Dorsolateral prefrontal cortex (tissue), 120 donors: ENCODE measurements at regions of chr15 and their contacts with region 1.

Region 1: DNA sequence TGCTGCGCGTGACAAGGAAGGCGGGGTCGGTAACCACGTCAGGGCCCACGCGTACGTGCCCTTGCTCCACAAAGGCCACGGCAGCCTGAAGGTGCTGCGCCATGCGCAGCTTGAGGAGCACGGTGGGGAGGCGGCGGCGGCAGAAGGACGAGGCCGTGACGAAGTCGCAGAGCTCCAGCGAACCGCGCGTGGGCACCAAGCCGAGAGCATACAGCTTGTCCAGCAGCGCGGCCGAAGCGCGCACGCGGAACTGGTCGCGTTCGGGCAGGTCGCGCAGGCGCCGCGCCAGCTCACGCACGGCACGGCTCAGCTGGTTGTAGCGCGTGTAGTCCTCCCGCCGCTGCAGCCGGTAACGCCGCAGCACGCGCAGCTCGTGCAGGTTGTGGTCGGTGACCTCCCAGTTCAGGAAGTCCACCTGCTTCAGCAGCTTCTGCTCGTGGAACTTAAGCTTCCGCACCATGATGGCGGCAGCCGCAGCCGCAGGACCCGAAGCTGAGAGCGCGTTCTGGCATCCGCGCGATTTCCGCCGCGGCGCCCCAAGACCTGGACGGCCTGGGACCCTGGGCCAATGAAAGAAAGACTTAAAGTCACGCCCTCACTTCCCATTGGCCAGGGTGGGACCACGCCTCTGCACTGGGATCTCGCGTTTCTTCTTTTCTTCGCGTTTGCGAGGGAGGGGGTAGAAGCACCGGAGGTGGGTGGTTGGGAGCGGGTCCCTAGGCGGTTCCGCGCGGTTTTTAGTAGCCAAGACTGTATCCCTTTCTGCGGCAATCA is at the start of gene IMP3:
- DNase-seq: peak; percentile 91 to 98 (median 96)
- H3K4me3 ChIP-seq: peak within 1 kb of the TSS; percentile 64 to 100 (median 93)
- H3K27ac ChIP-seq: peak within 1 kb of the TSS; percentile 53 to 99 (median 95)
- H3K27me3 ChIP-seq: no peaks in the 10 kb centered on the region
- CTCF ChIP-seq: peak in 31 of 56 donors; percentile 1 to 48 (median 28)
- total RNA-seq, gene IMP3: 32.2 to 67.9 (median 50.7) TPM

Region 2: GRCh38 chr15:75023181-75023871 is 616.6 kb before region 1 on chr15 and contains the start of gene PPCDC:
- intact Hi-C with region 1: loop called in 1 of 2 experiments (anchors 10 kb)
- DNase-seq: peak; percentile 92 to 98 (median 97)
- H3K4me3 ChIP-seq: peak within 1 kb of the TSS; percentile 49 to 98 (median 89)
- H3K27ac ChIP-seq: peak within 1 kb of the TSS in 57 of 59 donors; percentile 27 to 96 (median 88)
- H3K27me3 ChIP-seq: no peaks in the 10 kb centered on the region
- CTCF ChIP-seq: peak in 47 of 56 donors; percentile 3 to 62 (median 33)
- total RNA-seq, gene PPCDC: 3.9 to 23.6 (median 9.9) TPM

Region 3: DNA sequence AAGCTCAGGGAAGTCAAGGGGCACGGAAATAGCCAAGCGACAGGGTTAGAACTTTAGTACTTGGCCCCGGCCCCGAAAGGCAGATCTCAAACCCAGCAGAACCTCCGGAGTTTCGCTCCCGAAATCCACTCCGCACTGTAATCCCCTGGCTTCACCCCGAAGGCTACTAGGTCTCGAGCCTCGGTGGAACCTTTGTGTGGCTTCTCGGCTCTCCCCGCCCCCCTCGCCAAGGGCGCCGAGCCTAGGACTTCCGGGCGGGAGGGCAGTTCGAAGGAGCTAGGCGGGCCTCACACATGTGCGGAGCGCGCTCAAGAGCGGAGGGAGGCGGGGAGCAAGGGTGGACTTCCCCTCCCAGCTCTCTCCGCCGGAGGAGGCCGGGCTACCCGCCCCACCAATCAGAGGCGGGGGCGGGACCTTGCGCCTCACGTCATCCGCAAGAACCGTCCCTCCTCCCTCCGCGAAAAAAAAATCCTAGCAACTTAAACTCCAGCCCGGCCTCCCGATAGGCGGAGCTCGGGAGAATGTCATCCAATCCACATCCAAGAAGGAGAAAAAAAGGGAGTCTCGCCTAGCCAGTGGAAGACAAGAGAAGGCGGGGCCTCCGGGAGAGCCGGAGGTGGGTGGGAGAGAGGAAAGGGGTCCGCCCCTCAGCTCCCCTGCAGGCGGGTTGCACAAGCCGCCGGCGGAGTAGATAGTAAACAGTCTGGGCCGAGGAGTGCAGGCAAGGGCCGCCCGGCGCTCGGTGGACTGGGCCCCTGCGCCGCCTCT is 186.0 kb before region 1 on chr15:
- intact Hi-C with region 1: loop called (anchors 5 kb)
- DNase-seq: peak; percentile 94 to 99 (median 98)
- H3K4me3 ChIP-seq: peak overlapping the region; percentile 60 to 98 (median 91)
- H3K27ac ChIP-seq: peak overlapping the region; percentile 65 to 99 (median 95)
- H3K27me3 ChIP-seq: no peaks in the 10 kb centered on the region
- CTCF ChIP-seq: peak in 22 of 56 donors; percentile 8 to 43 (median 16)

Region 4: DNA sequence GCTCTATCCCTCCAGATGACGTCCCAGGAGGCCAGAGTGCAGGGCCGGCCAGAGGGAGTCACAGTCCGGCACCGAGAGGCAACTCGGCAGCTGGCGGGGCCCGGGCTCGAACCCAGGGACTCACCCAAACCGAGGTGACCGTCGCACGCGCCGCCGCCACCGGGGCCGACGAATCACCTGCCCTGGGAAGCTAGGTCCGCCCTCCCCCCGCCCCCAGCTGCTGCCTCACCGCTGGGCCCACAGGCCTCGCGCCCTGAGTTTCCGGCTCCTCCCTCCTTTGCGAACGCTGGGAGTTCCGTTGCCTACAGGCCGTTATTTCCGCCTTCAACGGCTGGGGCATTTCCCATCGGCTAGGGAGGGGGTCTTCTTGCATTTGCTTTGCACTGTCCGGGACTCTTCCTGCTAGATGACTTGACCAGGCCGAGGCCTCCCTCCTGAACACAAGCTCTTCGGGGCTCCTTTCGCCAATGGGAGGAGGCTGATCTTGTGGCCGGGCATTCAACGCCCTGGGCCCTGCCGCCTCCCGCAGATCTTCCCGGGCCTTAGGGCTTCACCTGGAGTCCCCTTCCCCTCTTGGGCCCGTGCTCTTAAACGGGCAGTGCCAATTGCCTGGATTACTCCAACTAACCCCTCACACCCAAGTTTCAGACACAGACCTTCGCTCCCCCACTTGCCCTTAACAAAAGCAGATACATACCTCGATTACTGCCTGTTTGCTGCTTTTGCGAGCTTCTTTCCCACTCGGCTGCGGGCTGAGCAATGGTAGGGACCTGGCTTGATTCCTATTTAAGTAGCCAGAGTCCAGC is 14.2 kb before region 1 on chr15 and contains the start of gene SNUPN:
- intact Hi-C with region 1: loop called (anchors 1 to 2 kb)
- DNase-seq: peak; percentile 82 to 95 (median 92)
- H3K4me3 ChIP-seq: peak within 1 kb of the TSS; percentile 62 to 99 (median 94)
- H3K27ac ChIP-seq: peak within 1 kb of the TSS; percentile 81 to 99 (median 96)
- H3K27me3 ChIP-seq: no peaks in the 10 kb centered on the region
- CTCF ChIP-seq: peak in 26 of 56 donors; percentile 8 to 51 (median 24)
- total RNA-seq, gene SNUPN: 20.8 to 41.9 (median 29.4) TPM

Region 5: DNA sequence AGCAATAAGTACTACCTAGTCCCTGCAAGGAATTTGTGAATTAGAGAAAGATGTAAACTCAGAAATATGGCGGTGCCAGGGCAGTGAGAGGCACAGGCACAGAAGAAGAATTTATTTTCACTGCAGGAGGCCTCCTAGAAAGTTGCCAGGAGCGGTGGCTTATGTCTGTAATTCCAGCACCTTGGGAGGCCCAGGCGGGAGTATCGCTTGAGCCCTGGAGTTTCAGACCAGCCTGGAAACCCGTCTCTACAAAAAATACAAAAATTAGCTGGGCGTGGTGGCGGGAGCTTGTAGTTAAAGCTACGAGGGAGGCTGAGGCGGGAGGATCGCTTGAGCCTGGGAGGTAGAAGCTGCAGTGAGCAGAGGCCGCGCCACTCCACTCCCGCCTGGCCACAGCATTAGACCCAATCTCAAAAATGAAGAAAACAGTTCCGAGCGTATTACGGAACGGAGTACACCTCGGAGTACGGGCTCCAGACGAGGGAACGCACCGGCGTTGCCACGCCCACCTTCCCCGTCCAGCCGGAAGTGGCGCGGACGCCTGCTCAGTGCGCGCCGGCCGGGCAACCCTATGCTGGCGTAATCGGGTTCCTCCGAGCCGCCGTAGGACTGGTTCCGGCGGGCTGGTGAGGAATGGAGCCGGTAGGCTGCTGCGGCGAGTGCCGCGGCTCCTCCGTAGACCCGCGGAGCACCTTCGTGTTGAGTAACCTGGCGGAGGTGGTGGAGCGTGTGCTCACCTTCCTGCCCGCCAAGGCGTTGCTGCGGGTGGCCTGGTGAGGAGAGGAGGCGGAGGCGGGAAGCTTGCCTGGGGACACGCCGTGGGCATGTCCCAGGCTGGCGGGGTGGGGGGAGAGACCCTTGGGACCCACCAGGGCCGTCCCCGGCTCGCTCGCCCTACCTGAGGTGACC is 263.7 kb after region 1 on chr15 and contains the start of gene FBXO22:
- intact Hi-C with region 1: loop called in 1 of 2 experiments (anchors 5 kb)
- DNase-seq: peak; percentile 77 to 94 (median 90)
- H3K4me3 ChIP-seq: peak within 1 kb of the TSS; percentile 65 to 98 (median 91)
- H3K27ac ChIP-seq: peak within 1 kb of the TSS in 58 of 59 donors; percentile 4 to 91 (median 74)
- H3K27me3 ChIP-seq: no peaks in the 10 kb centered on the region
- CTCF ChIP-seq: peak in 29 of 56 donors; percentile 5 to 49 (median 23)
- total RNA-seq, gene FBXO22: 18.2 to 31.2 (median 23.7) TPM